Right ventricle myocardium inferior (tissue), 1 donor: ENCODE measurements at regions of chr7 and their contacts with region 1.

Region 1: DNA sequence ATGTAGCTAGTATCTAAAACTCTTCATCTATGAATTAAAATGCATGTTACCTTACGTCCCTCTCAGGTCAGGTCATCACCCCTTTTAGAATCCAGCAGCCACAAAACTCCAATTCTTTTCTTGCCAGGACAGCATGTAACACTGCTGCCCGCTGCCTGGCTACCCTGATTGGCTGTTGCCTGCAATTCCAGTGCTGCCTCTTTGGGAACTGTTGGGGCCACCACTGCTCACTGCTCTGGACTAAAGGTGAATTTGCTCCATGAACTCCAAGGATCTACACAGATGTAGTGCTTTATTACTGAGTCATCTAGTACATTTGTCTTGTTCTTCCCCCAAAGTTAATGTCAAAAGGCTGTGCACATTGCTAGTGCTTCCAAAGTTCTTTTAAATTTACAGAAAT is 40.4 kb downstream of the SCIN start:
- DNase-seq: no peak
- ATAC-seq: no peak

Region 2: DNA sequence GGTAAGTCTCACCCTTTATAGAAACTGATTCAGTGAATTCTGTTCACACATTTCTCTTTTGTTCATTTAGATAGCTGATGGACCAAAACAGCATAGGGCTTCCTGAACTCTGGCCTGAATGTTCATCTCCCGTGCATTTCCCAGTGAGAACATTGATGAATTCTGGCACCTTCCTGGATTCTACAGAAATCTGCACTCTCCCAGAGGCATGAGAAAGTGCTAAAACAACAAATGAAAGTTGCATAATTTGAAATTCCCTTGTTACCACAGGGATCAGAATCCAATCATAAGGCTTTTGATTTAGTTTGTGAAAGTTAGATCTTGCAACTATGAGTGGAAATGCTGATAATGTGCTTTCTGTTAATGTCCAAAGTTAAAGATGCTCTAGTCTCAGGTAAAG is 70.0 kb before region 1 on chr7:
- intact Hi-C with region 1: loop called (anchors 5 kb)
- DNase-seq: no peak
- ATAC-seq: no peak